ENCODE measurements at regions of chr4 and their contacts with region 1.

Region 1: DNA sequence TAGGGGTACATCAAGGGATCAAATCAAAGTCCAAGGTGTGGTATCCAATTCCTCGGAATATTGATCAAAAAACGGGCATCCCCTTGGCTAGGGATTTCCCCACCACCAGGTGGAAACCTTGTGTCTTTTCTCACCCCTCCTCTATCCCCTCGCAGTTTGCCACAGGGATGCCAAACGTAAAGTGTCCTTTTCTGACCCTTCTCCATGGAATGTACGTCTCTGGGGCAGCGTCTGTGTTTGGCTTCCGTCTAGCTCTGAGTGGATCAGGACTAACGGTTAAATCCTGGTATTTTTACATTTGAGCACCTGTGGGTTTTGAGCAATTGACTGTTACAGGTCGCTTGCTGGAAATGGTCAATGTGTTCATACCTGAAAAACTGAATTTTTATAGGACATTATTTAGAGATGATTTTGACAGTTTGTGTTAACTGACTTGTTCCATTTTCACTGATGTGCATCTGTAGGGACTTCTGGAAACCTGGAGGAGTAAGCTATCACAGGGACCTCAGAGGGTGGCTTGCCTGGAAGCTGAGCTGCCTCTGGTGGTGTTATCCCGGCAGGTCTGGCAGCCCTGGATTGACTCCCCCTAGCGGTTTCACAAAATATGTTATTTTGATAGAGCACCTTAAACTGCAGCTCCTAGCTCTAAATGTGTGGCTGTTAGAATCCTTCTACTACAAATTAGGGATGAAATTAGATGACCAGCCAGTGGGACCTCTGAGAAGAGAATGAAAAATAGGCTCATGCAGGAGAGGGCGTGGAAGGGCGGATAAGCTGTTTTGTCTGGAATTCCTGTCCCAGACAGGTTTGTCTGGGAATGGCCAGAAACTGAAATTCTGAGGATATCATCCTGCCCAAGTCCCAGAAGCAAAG is 8.8 kb upstream of the MGST2 start:
- DNase-seq: peak; percentile 42
- H3K4me3 Mint-ChIP-seq: peak overlapping the region; percentile 73
- H3K27ac Mint-ChIP-seq: peak overlapping the region; percentile 94
- H3K4me1 Mint-ChIP-seq: peaks cover 45% of the 10 kb centered on the region
- H3K27me3 Mint-ChIP-seq: no peaks in the 10 kb centered on the region

Region 2: GRCh38 chr4:139015269-139015947 is 641.4 kb before region 1 on chr4 and contains the start of gene NOCT:
- intact Hi-C with region 1: loop called (anchors 5 kb)
- DNase-seq: peak; percentile 90
- H3K4me3 Mint-ChIP-seq: peak within 1 kb of the TSS; percentile 96
- H3K27ac Mint-ChIP-seq: peak within 1 kb of the TSS; percentile 91
- H3K4me1 Mint-ChIP-seq: peaks cover 43% of the 10 kb centered on the region
- H3K27me3 Mint-ChIP-seq: no peaks in the 10 kb centered on the region
- total RNA-seq, gene NOCT: 24.1 and 26.9 TPM in 2 replicates

Region 3: DNA sequence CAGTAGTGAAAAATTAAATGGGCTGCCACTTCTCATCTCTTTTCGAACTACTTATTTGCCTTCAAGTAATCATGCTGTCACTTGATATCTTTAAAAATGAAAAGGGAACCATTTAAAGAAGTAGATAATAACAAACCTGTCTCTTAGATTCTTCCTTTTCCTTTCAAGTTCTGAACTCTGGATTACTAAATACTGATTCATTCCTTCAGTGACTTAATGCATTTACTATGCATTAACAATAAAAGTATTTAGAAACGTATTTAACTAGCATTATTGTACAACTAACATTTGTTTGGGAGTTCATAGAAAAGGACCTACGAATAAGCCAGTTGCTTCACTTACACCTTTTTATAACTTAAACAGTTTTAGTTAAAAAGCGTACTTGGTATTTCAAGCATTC is 264.1 kb before region 1 on chr4:
- intact Hi-C with region 1: no loop called
- DNase-seq: no peak
- H3K4me3 Mint-ChIP-seq: no peak overlapping the region
- H3K27ac Mint-ChIP-seq: no peak overlapping the region
- H3K4me1 Mint-ChIP-seq: peaks cover 16% of the 10 kb centered on the region
- H3K27me3 Mint-ChIP-seq: no peaks in the 10 kb centered on the region

Region 4: GRCh38 chr4:139453371-139454110 is 203.3 kb before region 1 on chr4:
- intact Hi-C with region 1: loop called (anchors 1 kb)
- DNase-seq: peak; percentile 95
- H3K4me3 Mint-ChIP-seq: peak overlapping the region; percentile 94
- H3K27ac Mint-ChIP-seq: peak overlapping the region; percentile 99
- H3K4me1 Mint-ChIP-seq: peaks cover 58% of the 10 kb centered on the region
- H3K27me3 Mint-ChIP-seq: no peaks in the 10 kb centered on the region

Region 5: DNA sequence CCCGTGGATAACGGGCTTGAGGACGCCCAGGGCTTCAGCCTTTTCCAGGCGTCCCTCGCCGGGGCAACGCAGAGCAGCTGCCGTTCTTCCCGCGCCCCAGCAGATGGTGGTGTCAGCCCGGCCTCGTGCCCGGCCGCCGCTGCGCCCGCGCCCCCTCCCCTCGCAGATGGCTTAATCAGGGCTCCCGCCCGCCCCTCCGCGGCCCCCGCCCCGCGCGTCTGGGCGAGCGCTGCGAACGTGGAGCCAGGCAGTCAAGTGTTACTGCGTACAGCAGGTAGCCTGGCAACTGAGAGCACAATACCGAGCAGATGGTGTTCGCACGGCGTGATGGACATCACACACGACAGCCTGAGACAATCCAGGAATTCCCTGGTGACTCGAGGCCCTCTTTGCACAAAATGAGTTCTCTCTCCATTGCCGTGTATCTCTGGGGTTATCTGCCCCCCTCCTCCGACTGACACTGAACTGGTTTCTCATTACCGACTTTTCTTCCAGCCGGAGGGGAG is 78.1 kb after region 1 on chr4:
- intact Hi-C with region 1: loop called (anchors 2 kb)
- DNase-seq: peak; percentile 42
- H3K4me3 Mint-ChIP-seq: peak overlapping the region; percentile 66
- H3K27ac Mint-ChIP-seq: no peak overlapping the region
- H3K4me1 Mint-ChIP-seq: peaks cover 6% of the 10 kb centered on the region
- H3K27me3 Mint-ChIP-seq: peaks cover 45% of the 10 kb centered on the region

Region 6: DNA sequence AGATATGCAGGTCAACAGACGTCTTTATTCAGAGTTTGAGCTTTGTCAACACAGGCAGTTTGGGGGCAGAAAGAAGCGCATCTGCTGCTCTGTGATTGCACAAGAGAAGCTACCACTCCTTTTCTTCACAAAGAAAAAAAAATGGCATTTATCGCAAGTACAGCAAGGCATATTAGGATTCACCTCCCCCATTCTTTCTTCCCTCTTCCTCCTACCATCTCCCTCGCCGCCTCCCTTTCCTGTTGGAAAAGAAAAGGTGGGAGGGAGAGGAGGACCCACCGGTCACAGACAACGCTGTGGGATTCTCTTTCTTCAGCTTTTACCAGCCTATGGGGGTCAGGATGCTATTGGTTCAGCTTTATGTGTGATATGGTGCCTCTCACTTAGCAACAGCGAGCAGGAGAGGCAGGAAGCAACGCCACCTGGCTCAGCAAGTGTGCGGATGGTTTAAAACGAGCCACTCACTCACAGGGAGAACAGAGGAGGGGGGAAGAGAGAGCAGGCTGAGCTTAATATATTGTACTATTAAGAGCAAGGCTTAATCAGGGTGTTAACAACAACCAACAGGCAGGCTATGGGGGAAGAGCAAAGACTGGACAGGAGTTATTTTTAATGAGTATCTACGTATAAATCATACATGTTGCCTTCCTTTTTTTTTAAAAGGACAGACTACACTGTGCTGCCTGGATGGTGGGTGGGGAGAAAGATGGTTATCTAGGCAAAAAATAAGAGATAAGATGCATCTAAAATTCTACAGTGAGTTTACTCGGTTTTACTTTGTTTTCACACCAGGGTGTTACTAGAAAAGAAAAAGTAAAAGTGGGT is 392.4 kb after region 1 on chr4:
- intact Hi-C with region 1: loop called (anchors 5 kb)
- DNase-seq: peak; percentile 11
- H3K4me3 Mint-ChIP-seq: peak overlapping the region; percentile 77
- H3K27ac Mint-ChIP-seq: no peak overlapping the region
- H3K4me1 Mint-ChIP-seq: peaks cover 32% of the 10 kb centered on the region
- H3K27me3 Mint-ChIP-seq: peaks cover 59% of the 10 kb centered on the region

Region 7: GRCh38 chr4:140176735-140177134 is 519.9 kb after region 1 on chr4:
- intact Hi-C with region 1: no loop called
- DNase-seq: no peak
- H3K4me3 Mint-ChIP-seq: no peak overlapping the region
- H3K27ac Mint-ChIP-seq: no peak overlapping the region
- H3K4me1 Mint-ChIP-seq: no peaks in the 10 kb centered on the region
- H3K27me3 Mint-ChIP-seq: peaks cover 38% of the 10 kb centered on the region

Region 8: GRCh38 chr4:140252742-140253555 is 596.1 kb after region 1 on chr4:
- intact Hi-C with region 1: loop called (anchors 1 kb)
- DNase-seq: peak; percentile 32
- H3K4me3 Mint-ChIP-seq: peak overlapping the region; percentile 76
- H3K27ac Mint-ChIP-seq: peak overlapping the region; percentile 59
- H3K4me1 Mint-ChIP-seq: peaks cover 28% of the 10 kb centered on the region
- H3K27me3 Mint-ChIP-seq: peaks cover 36% of the 10 kb centered on the region

Region 9: GRCh38 chr4:140851032-140851636 is 1194.3 kb after region 1 on chr4:
- intact Hi-C with region 1: loop called (anchors 5 kb)
- DNase-seq: peak; percentile 3
- H3K4me3 Mint-ChIP-seq: no peak overlapping the region
- H3K27ac Mint-ChIP-seq: no peak overlapping the region
- H3K4me1 Mint-ChIP-seq: no peaks in the 10 kb centered on the region
- H3K27me3 Mint-ChIP-seq: peaks cover 2% of the 10 kb centered on the region

Measured in activated T-helper 1 cell treated with anti-CD3 and anti-CD28 coated beads, Interleukin-12 subunit alpha, Interleukin-12 subunit beta, Interleukin-2, Interleukin-4 antibody, amounts not matched to agents 30 ng/mL and 10 ng/mL and 1 ng/mL, durations not matched to agents 14 hours and 24 hours and 36 hours (primary cell).